ENCODE measurements at regions of chr15 and their contacts with region 1.

Region 1: GRCh38 chr15:34628577-34629152 is 45.2 kb upstream of the GOLGA8B start:
- DNase-seq: no peak
- H3K4me3 ChIP-seq: no peak overlapping the region
- CTCF ChIP-seq: no peak
- POLR2A ChIP-seq: no peak

Region 2: GRCh38 chr15:35123743-35124142 is 495.1 kb after region 1 on chr15:
- intact Hi-C with region 1: loop called (anchors 5 kb)
- DNase-seq: no peak
- H3K4me3 ChIP-seq: no peak overlapping the region
- CTCF ChIP-seq: no peak
- POLR2A ChIP-seq: no peak

Measured in lower leg skin (tissue), 4 donors.